Right ventricle myocardium inferior (tissue), 1 donor: ENCODE measurements at regions of chr12 and their contacts with region 1.

Region 1: GRCh38 chr12:21818627-21819026 is 44.1 kb upstream of the KCNJ8 start:
- DNase-seq: no peak
- ATAC-seq: no peak

Region 2: DNA sequence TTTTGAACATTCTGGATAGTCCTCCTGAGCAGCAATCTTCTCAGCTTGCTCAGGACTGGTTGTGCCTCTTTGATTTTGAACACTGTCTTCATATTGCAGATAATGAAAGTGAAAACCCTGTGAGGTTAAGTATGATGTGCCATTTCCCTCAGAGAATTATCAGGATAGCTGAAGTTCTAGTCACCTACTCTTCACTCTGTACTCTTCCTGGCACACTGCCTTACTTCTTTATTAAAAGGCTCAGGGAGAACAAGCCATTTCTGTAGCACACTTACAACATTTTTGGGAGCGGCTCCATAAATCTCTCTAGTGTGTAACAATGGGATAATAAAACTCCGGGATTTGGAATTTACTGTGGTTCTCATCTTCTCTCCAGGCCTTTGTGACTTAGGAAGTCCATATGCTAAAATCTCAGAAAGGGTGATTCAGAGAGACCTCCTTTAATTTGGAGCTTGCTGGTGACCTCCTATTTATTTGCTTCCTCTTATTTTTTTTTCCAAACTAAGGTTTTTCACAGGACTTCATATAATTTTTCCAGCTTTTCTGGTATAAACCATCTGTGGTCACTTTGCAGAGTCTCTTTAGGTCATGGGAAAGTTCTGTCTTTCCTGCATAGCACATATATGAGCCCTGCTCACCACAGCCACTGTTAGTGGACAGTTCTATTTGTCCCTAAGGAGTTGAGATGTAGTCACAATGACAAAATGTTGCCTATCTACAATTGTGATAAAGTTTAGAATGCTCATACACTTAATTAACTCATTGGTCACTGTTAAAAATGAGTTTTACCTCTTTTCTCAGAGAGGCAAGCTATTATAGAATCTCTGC is 107.5 kb before region 1 on chr12:
- intact Hi-C with region 1: loop called (anchors 5 kb)
- DNase-seq: no peak
- ATAC-seq: peak; percentile 48

Region 3: DNA sequence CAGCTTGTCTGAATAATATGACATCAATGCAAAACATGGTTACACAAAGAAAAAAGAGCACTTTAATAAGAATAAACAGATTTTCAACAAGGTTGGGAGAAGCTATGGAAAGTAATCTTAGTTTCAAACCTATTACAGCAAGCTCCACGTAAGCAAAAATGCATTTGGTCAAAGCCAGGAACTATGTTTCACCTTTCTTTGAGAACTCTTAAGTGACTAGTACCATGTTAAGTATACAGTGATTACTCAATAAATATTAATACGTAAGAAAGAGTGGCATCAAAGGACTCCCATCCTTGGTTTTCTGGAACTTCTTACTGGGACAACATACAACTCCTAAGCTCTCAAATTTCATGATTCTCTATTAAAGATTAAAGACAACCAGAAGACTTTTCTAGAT is 41.9 kb after region 1 on chr12:
- intact Hi-C with region 1: no loop called
- DNase-seq: no peak
- ATAC-seq: no peak

Region 4: DNA sequence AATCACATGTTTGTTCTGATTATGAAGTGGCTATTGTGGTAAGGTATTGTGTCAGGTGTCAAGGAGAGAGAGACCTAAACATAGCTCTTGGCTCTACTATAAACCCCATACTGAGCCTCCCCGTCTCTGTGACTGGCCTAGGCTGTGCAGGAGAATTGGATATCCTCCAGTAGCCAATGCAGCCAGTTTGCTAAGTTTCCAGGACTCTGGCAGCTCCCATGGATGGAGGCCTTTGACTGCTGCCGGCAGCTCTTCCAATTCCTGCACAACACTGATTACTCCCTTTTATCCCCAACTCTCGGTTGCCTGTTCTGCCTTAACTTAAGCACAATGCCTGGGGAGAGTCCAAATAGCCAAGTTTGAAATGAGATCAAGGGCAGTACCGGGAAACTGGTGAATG is 63.3 kb after region 1 on chr12:
- intact Hi-C with region 1: loop called (anchors 5 kb)
- DNase-seq: peak; percentile 63
- ATAC-seq: peak; percentile 84

Region 5: DNA sequence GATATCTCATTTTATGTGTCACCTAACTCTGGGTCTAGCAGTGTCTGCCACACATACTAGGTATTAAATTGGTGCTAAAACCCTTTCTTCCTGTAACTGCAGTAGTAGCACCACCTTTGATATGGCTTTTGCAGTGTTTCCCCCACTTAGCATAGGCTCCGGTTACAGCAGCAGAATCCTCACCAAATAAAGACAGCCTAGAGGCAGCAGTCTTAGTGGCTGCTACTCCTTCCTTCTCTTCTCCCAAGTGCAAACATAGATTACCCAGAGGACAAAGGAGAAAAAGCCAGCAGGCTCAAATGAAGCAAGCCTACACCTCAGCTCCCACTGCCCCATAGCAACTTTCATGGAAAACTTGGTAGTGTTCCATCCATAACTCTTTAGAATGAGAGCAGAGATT is 152.7 kb after region 1 on chr12:
- intact Hi-C with region 1: no loop called
- DNase-seq: no peak
- ATAC-seq: no peak